ENCODE measurements at regions of chr9 and their contacts with region 1.

Region 1: DNA sequence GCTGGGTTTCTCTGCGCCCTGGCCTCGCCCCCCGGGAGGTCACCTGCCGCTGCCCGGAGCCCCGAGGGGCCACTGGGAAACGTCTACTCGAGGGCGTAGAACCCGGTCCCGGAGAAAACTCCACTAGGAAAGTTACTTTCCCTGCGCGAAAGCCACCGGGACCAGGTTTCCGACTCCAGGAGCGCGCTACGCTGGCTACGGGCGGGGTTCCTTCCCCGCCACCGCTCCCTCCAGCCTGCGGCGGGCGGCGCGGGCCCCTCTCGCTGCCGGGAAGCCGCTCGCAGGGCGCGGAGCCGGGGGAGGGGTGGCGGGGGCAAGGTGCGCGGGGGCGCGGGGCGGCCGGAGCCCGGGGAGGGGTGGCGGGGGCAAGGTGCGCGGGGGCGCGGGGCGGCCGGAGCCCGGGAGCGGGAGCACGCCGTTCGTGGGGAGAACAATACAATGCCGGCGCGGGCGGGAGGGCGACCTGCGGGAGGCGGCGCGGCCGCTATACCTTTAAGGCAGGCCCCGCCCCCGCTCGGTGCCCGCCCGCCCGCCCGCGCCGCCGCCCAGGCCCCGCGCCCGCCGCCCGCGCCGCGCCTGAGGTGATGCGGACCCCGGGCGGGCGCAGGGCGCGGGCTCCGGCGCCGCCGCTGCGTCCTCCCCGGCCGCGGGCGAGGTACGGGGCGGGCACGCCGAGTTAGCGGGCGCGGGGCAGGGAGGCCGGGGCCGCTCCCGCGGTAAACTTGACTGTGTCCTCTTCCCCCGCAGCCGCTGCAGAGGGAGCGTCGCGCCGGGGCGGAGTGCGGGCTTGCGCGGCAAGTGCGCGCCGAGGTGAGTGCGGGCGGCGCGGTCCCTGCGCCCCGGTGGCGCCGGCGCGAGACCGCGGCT is 278.1 kb downstream of the AOPEP start:
- DNase-seq: peak; percentile 60
- H3K4me3 ChIP-seq: peak overlapping the region; percentile 64 to 71
- H3K27ac ChIP-seq: peak overlapping the region; percentile 94 to 96
- H3K4me1 ChIP-seq: peaks cover 3% of the 10 kb centered on the region
- H3K27me3 ChIP-seq: no peaks in the 10 kb centered on the region
- CTCF ChIP-seq: peak in 1 of 4 experiments; percentile 8
- POLR2A ChIP-seq: peak; percentile 30

Region 2: DNA sequence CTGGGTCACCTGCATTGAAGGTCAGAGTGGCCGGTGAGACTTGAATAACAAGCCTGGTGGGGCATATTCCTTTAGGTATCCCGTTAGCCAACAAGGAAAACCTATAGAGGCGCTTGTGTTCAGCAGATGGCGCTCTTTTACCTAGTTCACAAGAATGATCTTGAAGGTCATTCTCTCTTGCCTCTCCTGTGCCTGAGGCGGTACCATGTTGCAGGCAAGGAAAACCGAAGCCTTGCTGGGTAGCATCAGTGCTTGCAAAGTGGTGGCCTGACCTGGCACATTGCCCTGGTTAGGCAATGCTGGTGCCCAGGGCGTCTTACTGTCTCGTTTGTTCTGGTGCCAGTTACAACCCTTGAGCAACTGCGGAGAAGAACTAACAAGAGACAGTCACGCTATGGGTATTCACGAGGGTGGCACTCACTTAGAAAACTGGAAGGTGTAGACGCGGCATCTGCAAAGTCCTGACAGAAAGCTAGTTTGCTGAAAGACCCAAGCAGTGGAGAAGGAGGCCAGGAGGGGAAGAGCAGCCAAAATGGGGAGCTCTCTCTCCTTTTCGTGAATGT is 221.5 kb before region 1 on chr9:
- intact Hi-C with region 1: loop called (anchors 5 kb)
- DNase-seq: peak; percentile 96
- H3K4me3 ChIP-seq: no peak overlapping the region
- H3K27ac ChIP-seq: peak overlapping the region; percentile 22 to 23
- H3K4me1 ChIP-seq: no peaks in the 10 kb centered on the region
- H3K27me3 ChIP-seq: no peaks in the 10 kb centered on the region
- CTCF ChIP-seq: peak; percentile 31 to 86 (median 78)
- POLR2A ChIP-seq: no peak

Region 3: DNA sequence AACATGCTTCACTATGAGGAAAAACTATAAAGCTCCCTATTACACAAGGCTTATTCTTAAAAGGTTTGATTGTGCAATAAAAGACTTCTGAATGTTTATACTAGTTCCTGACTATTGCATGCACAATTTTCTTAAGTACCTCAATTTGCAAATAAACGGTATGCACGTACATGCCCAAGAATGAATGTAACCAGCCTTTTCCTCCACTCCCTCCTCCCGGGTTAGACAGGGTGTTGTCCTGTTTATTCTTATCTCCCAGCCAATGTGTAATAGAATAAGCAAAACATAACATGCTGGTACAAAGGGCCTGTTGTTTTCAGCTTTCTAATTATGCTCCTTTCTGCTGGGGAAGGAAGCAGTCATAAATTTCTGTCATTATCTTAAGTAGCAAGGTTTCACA is 199.1 kb before region 1 on chr9:
- intact Hi-C with region 1: loop called (anchors 5 kb)
- DNase-seq: peak; percentile 69
- H3K4me3 ChIP-seq: no peak overlapping the region
- H3K27ac ChIP-seq: peak overlapping the region; percentile 50 to 65
- H3K4me1 ChIP-seq: no peaks in the 10 kb centered on the region
- H3K27me3 ChIP-seq: no peaks in the 10 kb centered on the region
- CTCF ChIP-seq: no peak
- POLR2A ChIP-seq: no peak

Region 4: GRCh38 chr9:94867281-94867841 is 137.3 kb before region 1 on chr9:
- intact Hi-C with region 1: loop called (anchors 5 kb)
- DNase-seq: peak; percentile 67
- H3K4me3 ChIP-seq: no peak overlapping the region
- H3K27ac ChIP-seq: peak overlapping the region; percentile 79 to 83
- H3K4me1 ChIP-seq: no peaks in the 10 kb centered on the region
- H3K27me3 ChIP-seq: no peaks in the 10 kb centered on the region
- CTCF ChIP-seq: no peak
- POLR2A ChIP-seq: peak; percentile 17

Region 5: DNA sequence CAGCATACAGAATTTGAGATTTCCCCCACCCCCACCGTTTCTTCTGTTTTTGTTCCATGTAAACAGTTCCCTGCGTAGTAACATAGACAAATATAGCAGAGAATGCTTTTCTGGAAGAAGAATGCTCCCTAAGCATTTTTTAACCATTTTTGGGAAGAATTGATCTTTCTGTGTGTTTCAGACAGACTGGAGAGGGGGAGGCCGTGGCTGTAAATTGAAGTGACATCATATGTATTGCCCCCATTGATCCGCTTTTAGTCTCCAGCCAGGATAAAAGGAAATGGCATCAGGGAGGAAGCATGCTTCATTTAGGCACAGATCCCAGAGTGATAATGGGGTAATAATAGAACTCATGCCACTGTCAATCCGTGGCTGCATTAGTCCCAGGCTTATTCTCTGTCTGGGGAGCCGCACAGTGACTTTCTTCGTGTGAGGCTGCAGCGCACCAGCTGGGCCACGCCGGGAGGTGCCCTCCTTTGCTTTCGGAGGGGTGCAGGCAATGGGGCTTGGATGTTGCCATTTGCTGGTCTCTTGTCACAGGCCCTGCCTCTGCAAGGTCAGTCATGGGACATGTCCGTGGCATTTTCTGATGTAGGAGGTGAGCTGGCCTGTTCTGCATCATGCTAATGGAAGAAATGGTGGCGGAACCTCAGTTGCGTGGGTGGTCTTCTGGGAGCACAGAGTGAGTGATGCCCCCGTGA is 51.4 kb after region 1 on chr9:
- intact Hi-C with region 1: loop called (anchors 5 kb)
- DNase-seq: no peak
- H3K4me3 ChIP-seq: peak overlapping the region in 1 of 2 donors; percentile 15
- H3K27ac ChIP-seq: peak overlapping the region; percentile 70 to 86
- H3K4me1 ChIP-seq: peaks cover 10% of the 10 kb centered on the region
- H3K27me3 ChIP-seq: no peaks in the 10 kb centered on the region
- CTCF ChIP-seq: no peak
- POLR2A ChIP-seq: no peak

Measured in prostate gland (tissue), 2 donors.